ENCODE measurements at regions of chr7 and their contacts with region 1.

Region 1: DNA sequence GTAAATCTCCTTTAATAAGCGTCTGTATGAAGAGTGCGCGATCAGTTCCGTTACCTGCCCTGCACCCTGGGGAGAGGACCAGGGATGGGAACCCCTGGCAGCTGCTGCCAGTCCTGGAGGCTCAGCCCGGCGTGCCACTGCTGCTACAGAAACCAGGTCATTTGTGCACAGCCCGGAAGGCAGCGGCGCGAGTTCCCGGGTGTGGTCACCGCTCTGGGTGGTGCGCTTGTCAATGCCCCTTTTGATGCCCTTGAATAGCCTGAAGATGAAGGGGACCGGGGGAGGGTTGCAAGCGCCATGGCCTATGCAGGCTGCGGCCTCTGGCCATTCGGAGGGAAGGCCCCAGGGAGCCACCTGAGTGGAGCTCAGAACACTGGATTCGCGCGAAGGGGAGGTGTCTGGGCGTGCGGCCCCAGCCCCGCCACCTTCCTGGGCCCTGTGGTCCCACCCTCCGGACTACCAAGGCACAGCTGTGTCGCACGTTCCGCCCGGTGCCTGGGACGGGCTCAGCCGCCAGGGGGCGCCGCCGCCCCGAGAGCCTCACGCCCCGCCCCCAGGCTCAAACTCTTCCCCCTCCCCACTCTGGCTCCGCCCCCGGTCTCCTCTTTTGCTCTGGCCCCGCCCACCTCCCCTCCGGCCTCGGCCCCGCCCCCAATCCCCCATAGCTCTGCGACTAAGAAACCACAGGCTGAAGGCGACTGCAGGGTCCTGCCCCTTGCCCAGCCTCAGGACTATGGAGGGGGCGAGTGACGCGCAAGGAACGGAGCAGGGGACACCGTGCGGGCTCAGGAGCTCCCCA is 16.5 kb downstream of the AP5Z1 start:
- DNase-seq: peak; percentile 65 to 79 (median 76)
- H3K4me3 ChIP-seq: peak overlapping the region in 1 of 2 donors; percentile 32
- H3K4me3 Mint-ChIP-seq: peak overlapping the region in 4 of 8 donors; percentile 19 to 57 (median 32)
- H3K27ac ChIP-seq: no peak overlapping the region
- H3K27ac Mint-ChIP-seq: peak overlapping the region in 3 of 7 donors; percentile 2 to 66 (median 48)
- H3K4me1 ChIP-seq: peaks cover 5% of the 10 kb centered on the region
- H3K4me1 Mint-ChIP-seq: peaks cover 1 to 12% (median 9%) of the 10 kb centered on the region in 4 donors
- H3K27me3 ChIP-seq: no peaks in the 10 kb centered on the region
- H3K27me3 Mint-ChIP-seq: no peaks in the 10 kb centered on the region

Region 2: GRCh38 chr7:5088906-5089305 is 297.0 kb after region 1 on chr7:
- CTCF ChIA-PET with region 1: interaction called, 62 read pairs
- POLR2A ChIA-PET with region 1: no interaction called
- intact Hi-C with region 1: no loop called
- DNase-seq: no peak
- H3K4me3 ChIP-seq: no peak overlapping the region
- H3K4me3 Mint-ChIP-seq: no peak overlapping the region
- H3K27ac ChIP-seq: no peak overlapping the region
- H3K27ac Mint-ChIP-seq: peak overlapping the region in 2 of 7 donors; percentile 15 to 81
- H3K4me1 ChIP-seq: peaks cover 4% of the 10 kb centered on the region
- H3K4me1 Mint-ChIP-seq: peaks cover 0 to 8% (median 2%) of the 10 kb centered on the region in 4 donors
- H3K27me3 ChIP-seq: no peaks in the 10 kb centered on the region
- H3K27me3 Mint-ChIP-seq: peaks cover 0 to 7% of the 10 kb centered on the region in 2 donors